ENCODE measurements at regions of chr1 and their contacts with region 1.

Region 1: GRCh38 chr1:26874896-26875295 is 11.9 kb downstream of the SFN start:
- DNase-seq: no peak
- H3K4me3 Mint-ChIP-seq: no peak overlapping the region
- H3K27ac Mint-ChIP-seq: no peak overlapping the region
- H3K4me1 Mint-ChIP-seq: no peaks in the 10 kb centered on the region
- H3K27me3 Mint-ChIP-seq: no peaks in the 10 kb centered on the region

Region 2: GRCh38 chr1:26799479-26800142 is 75.3 kb before region 1 on chr1:
- intact Hi-C with region 1: loop called (anchors 2 kb)
- DNase-seq: no peak
- H3K4me3 Mint-ChIP-seq: peak overlapping the region; percentile 55
- H3K27ac Mint-ChIP-seq: peak overlapping the region; percentile 79
- H3K4me1 Mint-ChIP-seq: peaks cover 53% of the 10 kb centered on the region
- H3K27me3 Mint-ChIP-seq: no peaks in the 10 kb centered on the region

Region 3: GRCh38 chr1:26853156-26853555 is 21.7 kb before region 1 on chr1:
- intact Hi-C with region 1: loop called (anchors 1 kb)
- DNase-seq: peak; percentile 53
- H3K4me3 Mint-ChIP-seq: no peak overlapping the region
- H3K27ac Mint-ChIP-seq: no peak overlapping the region
- H3K4me1 Mint-ChIP-seq: no peaks in the 10 kb centered on the region
- H3K27me3 Mint-ChIP-seq: no peaks in the 10 kb centered on the region

Measured in activated T-helper 1 cell treated with anti-CD3 and anti-CD28 coated beads, Interleukin-12 subunit alpha, Interleukin-12 subunit beta, Interleukin-2, Interleukin-4 antibody, amounts not matched to agents 30 ng/mL and 10 ng/mL and 1 ng/mL, durations not matched to agents 14 hours and 24 hours and 36 hours (primary cell).